Activated T-helper 1 cell treated with anti-CD3 and anti-CD28 coated beads, Interleukin-12 subunit alpha, Interleukin-12 subunit beta, Interleukin-2, Interleukin-4 antibody, amounts not matched to agents 30 ng/mL and 10 ng/mL and 1 ng/mL, durations not matched to agents 14 hours and 24 hours and 36 hours (primary cell): ENCODE measurements at regions of chr12 and their contacts with region 1.

Region 1: GRCh38 chr12:2877047-2877952 is at the starts of genes FOXM1 and RHNO1:
- DNase-seq: peak; percentile 86
- H3K4me3 Mint-ChIP-seq: peak within 1 kb of the TSS; percentile 99
- H3K27ac Mint-ChIP-seq: peak within 1 kb of the TSS; percentile 100
- H3K4me1 Mint-ChIP-seq: peaks cover 51% of the 10 kb centered on the region
- H3K27me3 Mint-ChIP-seq: no peaks in the 10 kb centered on the region
- total RNA-seq, gene FOXM1: 72.6 and 75.9 TPM in 2 replicates
- total RNA-seq, gene RHNO1: 43.3 and 48.1 TPM in 2 replicates

Region 2: GRCh38 chr12:2640705-2641104 is 236.6 kb before region 1 on chr12:
- intact Hi-C with region 1: no loop called
- DNase-seq: no peak
- H3K4me3 Mint-ChIP-seq: no peak overlapping the region
- H3K27ac Mint-ChIP-seq: no peak overlapping the region
- H3K4me1 Mint-ChIP-seq: peaks cover 19% of the 10 kb centered on the region
- H3K27me3 Mint-ChIP-seq: peaks cover 11% of the 10 kb centered on the region

Region 3: GRCh38 chr12:2752676-2753371 is 124.5 kb before region 1 on chr12:
- intact Hi-C with region 1: no loop called
- DNase-seq: peak; percentile 78
- H3K4me3 Mint-ChIP-seq: no peak overlapping the region
- H3K27ac Mint-ChIP-seq: no peak overlapping the region
- H3K4me1 Mint-ChIP-seq: no peaks in the 10 kb centered on the region
- H3K27me3 Mint-ChIP-seq: peaks cover 18% of the 10 kb centered on the region

Region 4: GRCh38 chr12:2862876-2863275 is 14.4 kb before region 1 on chr12:
- intact Hi-C with region 1: loop called (anchors 1 kb)
- DNase-seq: no peak
- H3K4me3 Mint-ChIP-seq: no peak overlapping the region
- H3K27ac Mint-ChIP-seq: no peak overlapping the region
- H3K4me1 Mint-ChIP-seq: peaks cover 15% of the 10 kb centered on the region
- H3K27me3 Mint-ChIP-seq: no peaks in the 10 kb centered on the region

Region 5: DNA sequence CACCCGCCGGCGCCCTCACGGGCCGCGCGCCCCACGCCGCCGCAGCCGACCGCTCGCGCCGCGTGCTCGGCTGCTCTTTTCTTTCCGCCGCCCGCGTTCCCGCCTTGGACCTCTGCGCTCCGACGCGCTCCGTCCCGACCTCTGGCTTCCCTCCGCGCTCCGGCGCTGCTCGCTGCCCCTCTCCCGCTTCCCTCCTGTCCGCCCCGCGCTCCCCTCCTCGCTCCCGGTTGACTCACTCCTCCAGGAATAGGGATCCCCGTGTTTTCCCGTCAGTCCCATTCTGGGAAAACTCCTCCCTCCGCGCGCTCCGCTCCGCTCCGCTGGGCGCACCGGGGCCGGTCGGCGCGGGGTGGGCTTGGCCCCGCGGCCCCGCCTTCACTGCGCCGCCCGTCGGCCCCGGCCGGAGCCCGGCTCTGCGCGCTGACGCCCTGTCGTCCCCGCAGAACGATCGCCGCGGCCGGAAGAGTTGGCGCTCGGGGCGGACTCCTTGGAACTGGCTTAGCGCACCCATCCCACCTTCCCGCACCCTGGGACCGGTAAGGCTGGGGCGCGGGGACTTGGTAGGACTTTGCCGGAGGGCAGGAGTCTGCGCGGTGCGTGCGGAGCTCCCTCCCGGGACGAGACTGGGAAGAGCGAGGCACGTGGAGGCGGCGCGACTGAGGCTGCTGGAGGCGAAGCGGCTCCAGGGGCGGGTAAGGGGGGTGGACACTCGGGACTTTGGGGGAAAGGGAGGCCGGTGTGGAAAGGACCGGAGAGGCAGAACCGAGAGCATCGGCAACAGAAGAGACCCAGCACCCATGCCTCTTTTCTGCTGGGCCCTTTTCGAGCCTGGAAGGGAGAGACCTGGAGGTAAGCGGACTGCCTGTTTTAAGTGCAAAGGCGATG is 82.4 kb after region 1 on chr12:
- intact Hi-C with region 1: loop called (anchors 5 kb)
- DNase-seq: no peak
- H3K4me3 Mint-ChIP-seq: peak overlapping the region; percentile 74
- H3K27ac Mint-ChIP-seq: peak overlapping the region; percentile 15
- H3K4me1 Mint-ChIP-seq: peaks cover 18% of the 10 kb centered on the region
- H3K27me3 Mint-ChIP-seq: peaks cover 63% of the 10 kb centered on the region